ENCODE measurements at regions of chr15 and their contacts with region 1.

Region 1: GRCh38 chr15:58070801-58071418 is 5.4 kb upstream of the ALDH1A2 start:
- DNase-seq: peak; percentile 73
- H3K4me3 ChIP-seq: no peak overlapping the region
- H3K27ac ChIP-seq: no peak overlapping the region
- H3K4me1 ChIP-seq: peaks cover 3% of the 10 kb centered on the region
- H3K27me3 ChIP-seq: no peaks in the 10 kb centered on the region
- CTCF ChIP-seq: peak; percentile 77 to 93
- POLR2A ChIP-seq: no peak

Region 2: GRCh38 chr15:57527382-57528091 is 543.4 kb before region 1 on chr15:
- CTCF ChIA-PET with region 1: interaction called, 12 read pairs
- POLR2A ChIA-PET with region 1: no interaction called
- dilution Hi-C with region 1: no loop called
- intact Hi-C with region 1: no loop called
- DNase-seq: peak; percentile 86
- H3K4me3 ChIP-seq: no peak overlapping the region
- H3K27ac ChIP-seq: no peak overlapping the region
- H3K4me1 ChIP-seq: peaks cover 35% of the 10 kb centered on the region
- H3K27me3 ChIP-seq: no peaks in the 10 kb centered on the region
- CTCF ChIP-seq: peak; percentile 41
- POLR2A ChIP-seq: no peak

Region 3: GRCh38 chr15:57667171-57667849 is 403.6 kb before region 1 on chr15:
- CTCF ChIA-PET with region 1: interaction called, 14 read pairs
- POLR2A ChIA-PET with region 1: no interaction called
- dilution Hi-C with region 1: no loop called
- intact Hi-C with region 1: loop called (anchors 2 kb)
- DNase-seq: peak; percentile 67
- H3K4me3 ChIP-seq: no peak overlapping the region
- H3K27ac ChIP-seq: no peak overlapping the region
- H3K4me1 ChIP-seq: peaks cover 7% of the 10 kb centered on the region
- H3K27me3 ChIP-seq: no peaks in the 10 kb centered on the region
- CTCF ChIP-seq: peak in 1 of 2 donors; percentile 42
- POLR2A ChIP-seq: no peak

Region 4: DNA sequence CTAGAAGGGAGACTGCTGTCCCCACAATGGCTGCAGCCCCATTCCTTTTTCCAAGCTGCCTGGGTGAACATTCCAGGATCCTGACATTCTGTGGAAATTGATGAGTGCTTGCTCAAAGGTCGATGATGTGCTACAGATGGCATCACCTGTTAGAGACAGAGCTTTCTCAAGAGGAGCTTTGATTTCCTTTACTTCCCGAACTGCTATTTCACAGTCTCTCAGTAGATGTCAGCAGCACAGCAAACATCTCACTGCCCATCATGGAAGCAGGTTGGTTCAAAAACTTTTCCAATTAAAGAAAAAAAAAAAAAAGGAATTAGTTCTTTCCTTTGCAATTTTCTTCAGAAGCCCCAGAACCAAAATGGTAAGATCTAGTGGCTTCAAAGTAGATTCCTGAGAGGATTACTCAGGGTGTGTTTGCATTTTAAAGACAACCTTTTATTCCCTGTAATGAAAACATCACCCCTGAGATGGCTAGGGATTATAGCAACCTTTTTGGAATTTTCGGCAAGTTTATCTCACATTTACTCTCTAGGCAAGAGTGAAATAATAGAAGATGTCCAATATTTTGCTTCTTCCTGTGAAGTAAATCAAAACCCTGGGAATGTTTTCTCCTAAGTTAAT is 319.6 kb before region 1 on chr15:
- CTCF ChIA-PET with region 1: interaction called, 636 read pairs
- POLR2A ChIA-PET with region 1: no interaction called
- dilution Hi-C with region 1: no loop called
- intact Hi-C with region 1: loop called (anchors 1 kb)
- DNase-seq: peak; percentile 72
- H3K4me3 ChIP-seq: no peak overlapping the region
- H3K27ac ChIP-seq: no peak overlapping the region
- H3K4me1 ChIP-seq: no peaks in the 10 kb centered on the region
- H3K27me3 ChIP-seq: no peaks in the 10 kb centered on the region
- CTCF ChIP-seq: peak; percentile 53 to 67
- POLR2A ChIP-seq: no peak

Region 5: GRCh38 chr15:57969354-57969753 is 101.6 kb before region 1 on chr15:
- CTCF ChIA-PET with region 1: interaction called, 83 read pairs
- POLR2A ChIA-PET with region 1: no interaction called
- dilution Hi-C with region 1: no loop called
- intact Hi-C with region 1: loop called (anchors 1 kb)
- DNase-seq: peak; percentile 46
- H3K4me3 ChIP-seq: no peak overlapping the region
- H3K27ac ChIP-seq: no peak overlapping the region
- H3K4me1 ChIP-seq: no peaks in the 10 kb centered on the region
- H3K27me3 ChIP-seq: no peaks in the 10 kb centered on the region
- CTCF ChIP-seq: peak in 1 of 2 donors; percentile 19
- POLR2A ChIP-seq: no peak

Region 6: DNA sequence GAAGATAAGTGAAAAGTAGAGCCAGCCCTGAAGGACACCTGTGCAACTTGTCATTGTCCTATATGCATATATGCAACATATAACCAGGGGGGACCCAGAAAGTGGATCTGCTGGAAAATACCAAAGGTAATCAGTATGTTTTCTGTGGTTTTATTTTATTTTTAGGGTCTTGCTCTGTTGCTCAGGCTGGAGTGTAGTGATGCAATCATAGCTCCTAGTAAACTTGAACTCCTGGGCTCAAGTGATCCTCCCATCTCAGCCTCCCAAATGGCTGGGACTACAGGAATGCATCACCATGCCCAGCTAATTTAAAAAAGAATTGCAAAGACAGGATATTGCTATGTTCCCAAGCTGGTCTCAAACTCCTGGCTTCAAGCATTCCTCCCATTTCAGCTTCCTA is 12.6 kb after region 1 on chr15:
- CTCF ChIA-PET with region 1: interaction called, 19 read pairs
- POLR2A ChIA-PET with region 1: no interaction called
- dilution Hi-C with region 1: no loop called
- intact Hi-C with region 1: no loop called
- DNase-seq: no peak
- H3K4me3 ChIP-seq: no peak overlapping the region
- H3K27ac ChIP-seq: no peak overlapping the region
- H3K4me1 ChIP-seq: peaks cover 6% of the 10 kb centered on the region
- H3K27me3 ChIP-seq: no peaks in the 10 kb centered on the region
- CTCF ChIP-seq: no peak
- POLR2A ChIP-seq: no peak

Region 7: DNA sequence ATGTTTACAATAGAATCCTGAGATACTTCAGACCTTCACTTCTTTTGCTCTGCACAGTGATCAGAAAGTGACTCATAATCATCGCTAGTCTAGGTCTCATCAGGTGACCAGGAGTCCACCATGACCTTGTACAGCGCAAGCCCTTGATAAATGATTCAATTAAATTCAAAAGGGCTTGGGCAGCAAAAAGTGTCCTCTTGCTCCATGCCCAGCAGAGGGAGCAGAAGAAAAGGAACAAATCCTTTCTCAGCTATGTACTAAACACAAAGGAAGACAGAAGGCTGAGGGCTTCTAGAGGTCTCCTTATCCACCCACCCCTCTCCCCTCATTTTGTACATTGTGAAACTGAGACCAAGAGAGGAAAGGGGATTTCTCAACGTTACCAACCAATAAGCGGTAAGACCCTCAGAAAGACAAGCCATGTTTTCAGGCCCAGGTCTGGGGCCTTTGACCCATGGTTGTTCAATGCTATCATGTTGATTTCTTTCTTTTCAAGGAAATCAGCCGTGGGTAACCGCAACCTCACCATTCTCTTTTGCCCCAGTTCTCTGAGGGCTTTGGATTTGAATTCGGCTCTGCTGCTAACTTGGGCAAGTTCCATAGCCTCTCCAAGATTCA is 142.1 kb after region 1 on chr15:
- CTCF ChIA-PET with region 1: interaction called, 15 read pairs
- POLR2A ChIA-PET with region 1: no interaction called
- dilution Hi-C with region 1: no loop called
- intact Hi-C with region 1: no loop called
- DNase-seq: peak; percentile 56
- H3K4me3 ChIP-seq: no peak overlapping the region
- H3K27ac ChIP-seq: no peak overlapping the region
- H3K4me1 ChIP-seq: peaks cover 5% of the 10 kb centered on the region
- H3K27me3 ChIP-seq: no peaks in the 10 kb centered on the region
- CTCF ChIP-seq: peak; percentile 35 to 59
- POLR2A ChIP-seq: no peak

Measured in endothelial cell of umbilical vein (primary cell).